ENCODE measurements at regions of chr9 and their contacts with region 1.

Region 1: GRCh38 chr9:89021154-89021803 is 30.0 kb downstream of the S1PR3 start:
- DNase-seq: peak; percentile 94
- ATAC-seq: peak; percentile 75
- H3K4me3 ChIP-seq: no peak overlapping the region
- H3K27ac ChIP-seq: peak overlapping the region; percentile 5; the same call in 1 of the 2 replicates
- H3K4me1 ChIP-seq: peaks cover 28% of the 10 kb centered on the region
- H3K27me3 ChIP-seq: no peaks in the 10 kb centered on the region
- CTCF ChIP-seq: no peak
- POLR2A ChIP-seq: no peak
- RAD21 ChIP-seq: no peak

Region 2: GRCh38 chr9:88927510-88927909 is 93.8 kb before region 1 on chr9:
- CTCF ChIA-PET with region 1: no interaction called
- POLR2A ChIA-PET with region 1: no interaction called
- dilution Hi-C with region 1: no loop called
- in situ Hi-C with region 1: no loop called
- intact Hi-C with region 1: no loop called
- DNase-seq: no peak
- ATAC-seq: no peak
- H3K4me3 ChIP-seq: no peak overlapping the region
- H3K27ac ChIP-seq: no peak overlapping the region
- H3K4me1 ChIP-seq: peaks cover 4% of the 10 kb centered on the region; the same call in 1 of the 2 replicates
- H3K27me3 ChIP-seq: peaks cover 2% of the 10 kb centered on the region; the same call in 1 of the 2 replicates
- CTCF ChIP-seq: no peak
- POLR2A ChIP-seq: no peak
- RAD21 ChIP-seq: no peak

Region 3: GRCh38 chr9:89278997-89279739 is 257.9 kb after region 1 on chr9:
- CTCF ChIA-PET with region 1: no interaction called
- POLR2A ChIA-PET with region 1: no interaction called
- dilution Hi-C with region 1: no loop called
- in situ Hi-C with region 1: no loop called
- intact Hi-C with region 1: loop called (anchors 5 kb)
- DNase-seq: peak; percentile 71
- ATAC-seq: peak; percentile 39; the same call in 1 of the 2 replicates
- H3K4me3 ChIP-seq: no peak overlapping the region
- H3K27ac ChIP-seq: no peak overlapping the region
- H3K4me1 ChIP-seq: peaks cover 7% of the 10 kb centered on the region; the same call in 1 of the 2 replicates
- H3K27me3 ChIP-seq: no peaks in the 10 kb centered on the region
- CTCF ChIP-seq: peak; percentile 75
- POLR2A ChIP-seq: no peak
- RAD21 ChIP-seq: peak; percentile 72

Region 4: DNA sequence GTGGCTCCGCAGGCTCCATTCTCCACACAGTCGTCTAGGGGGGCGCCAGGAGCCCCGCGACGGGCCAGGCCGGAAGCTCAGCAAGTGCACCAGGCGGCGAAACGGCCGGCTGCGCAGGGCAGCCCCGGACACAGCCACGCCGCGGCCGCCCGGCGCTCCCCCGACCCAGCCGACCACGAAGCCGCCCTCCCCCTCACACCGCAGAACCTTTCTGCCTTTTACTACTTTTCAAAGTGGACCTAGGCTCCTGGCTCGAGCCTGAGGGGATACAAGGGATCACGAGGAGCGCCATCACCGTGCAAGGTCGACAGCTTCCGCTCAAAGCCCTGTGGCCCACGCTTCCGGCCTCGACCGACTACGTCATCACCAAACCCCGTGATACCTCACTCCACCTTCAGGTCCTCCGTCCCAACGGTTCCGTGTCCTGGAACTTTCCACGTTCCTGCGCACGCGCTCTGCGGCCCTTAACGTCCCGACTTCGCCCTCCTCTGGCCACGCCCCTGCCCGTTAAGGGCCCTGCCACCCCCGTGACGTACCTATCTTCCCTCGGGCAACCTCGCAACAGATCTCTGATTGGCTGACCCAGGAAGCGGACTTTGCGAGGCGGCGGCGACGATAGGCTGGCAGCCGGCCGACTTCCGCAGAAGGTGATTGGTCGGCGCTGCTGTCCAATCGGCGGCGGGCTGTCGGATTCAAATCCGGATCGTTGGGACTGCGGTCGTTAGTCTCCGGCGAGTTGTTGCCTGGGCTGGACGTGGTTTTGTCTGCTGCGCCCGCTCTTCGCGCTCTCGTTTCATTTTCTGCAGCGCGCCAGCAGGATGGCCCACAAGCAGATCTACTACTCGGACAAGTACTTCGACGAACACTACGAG is 289.4 kb after region 1 on chr9 and contains the start of gene CKS2:
- CTCF ChIA-PET with region 1: interaction called, 4 read pairs
- POLR2A ChIA-PET with region 1: no interaction called
- dilution Hi-C with region 1: no loop called
- in situ Hi-C with region 1: no loop called
- intact Hi-C with region 1: loop called (anchors 5 kb)
- DNase-seq: peak; percentile 100
- ATAC-seq: peak; percentile 89
- H3K4me3 ChIP-seq: peak within 1 kb of the TSS; percentile 67
- H3K27ac ChIP-seq: peak within 1 kb of the TSS; percentile 95
- H3K4me1 ChIP-seq: peaks cover 3% of the 10 kb centered on the region
- H3K27me3 ChIP-seq: no peaks in the 10 kb centered on the region
- CTCF ChIP-seq: no peak
- POLR2A ChIP-seq: peak; percentile 99
- RAD21 ChIP-seq: no peak
- total RNA-seq, gene CKS2: 192 and 322 TPM in 2 replicates

Measured in IMR-90 (cell line).